ENCODE measurements at regions of chr11 and their contacts with region 1.

Region 1: GRCh38 chr11:123707606-123708205 is 33.8 kb downstream of the ZNF202 start:
- DNase-seq: peak; percentile 39
- ATAC-seq: peak; percentile 71

Region 2: GRCh38 chr11:123511037-123511870 is 196.5 kb before region 1 on chr11:
- intact Hi-C with region 1: loop called (anchors 10 kb)
- DNase-seq: peak; percentile 90
- ATAC-seq: peak; percentile 96

Region 3: GRCh38 chr11:123580557-123581275 is 127.0 kb before region 1 on chr11:
- intact Hi-C with region 1: loop called (anchors 2 kb)
- DNase-seq: peak; percentile 67
- ATAC-seq: peak; percentile 78

Region 4: DNA sequence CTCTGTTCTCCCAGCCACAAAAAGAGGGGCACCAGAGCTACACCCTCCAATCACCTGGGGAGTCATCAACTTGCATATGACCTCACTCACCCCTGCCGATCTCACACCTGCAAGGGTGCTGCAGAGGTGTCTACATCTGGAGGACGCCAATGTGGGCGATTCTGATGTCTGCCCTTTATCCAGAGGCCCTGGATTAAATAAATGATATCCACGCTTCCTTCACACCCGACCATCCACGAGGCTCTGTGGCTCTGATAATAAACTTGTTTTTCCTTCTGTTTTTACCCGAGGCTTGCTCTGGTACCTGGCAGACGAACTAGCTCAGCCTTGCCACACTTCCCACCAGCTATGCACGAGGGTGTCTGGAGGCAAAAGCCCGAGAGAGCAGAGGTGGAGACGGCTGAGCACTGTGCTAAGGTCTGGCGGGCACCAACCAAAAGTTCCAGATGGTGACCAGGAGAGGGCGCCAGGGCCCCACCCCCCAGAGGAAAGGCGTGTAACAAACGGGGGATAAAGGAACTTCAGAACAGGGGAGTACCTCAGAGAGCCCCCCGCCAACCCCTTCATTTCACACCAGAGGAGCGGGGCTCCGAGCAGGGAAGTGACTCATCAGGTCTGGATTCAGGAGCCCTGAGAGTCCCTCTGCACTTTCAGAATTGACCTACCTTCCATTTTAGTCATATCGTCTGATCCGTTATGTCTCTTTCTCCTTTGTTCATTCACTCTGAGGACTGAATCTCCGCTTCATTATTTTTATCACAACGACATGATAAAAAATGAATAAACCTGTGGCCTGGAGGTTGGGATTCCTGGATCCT is 66.8 kb before region 1 on chr11:
- intact Hi-C with region 1: loop called (anchors 5 kb)
- DNase-seq: peak; percentile 49
- ATAC-seq: peak; percentile 79

Measured in Right ventricle myocardium superior (tissue), 1 donor.